ENCODE measurements at regions of chr12 and their contacts with region 1.

Region 1: DNA sequence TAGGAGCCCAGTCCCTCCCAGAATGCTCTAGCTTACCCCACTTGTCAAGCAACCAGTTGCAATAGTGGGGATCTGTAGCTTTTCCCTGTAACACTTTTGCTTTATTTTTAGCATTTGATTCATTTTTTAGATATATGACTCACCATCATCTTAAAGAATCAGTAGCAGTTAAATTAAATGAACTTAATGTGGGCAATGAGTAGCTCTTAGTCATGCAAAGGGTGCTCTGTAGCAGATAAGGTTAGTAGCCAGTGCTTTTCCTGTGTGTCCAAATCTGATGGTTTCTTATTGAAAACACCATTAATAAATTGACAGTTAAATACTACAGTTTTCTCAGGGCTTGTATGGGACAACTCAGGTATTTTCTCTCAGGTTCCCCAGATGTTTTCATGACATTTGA is 311.8 kb downstream of the RERGL start:
- DNase-seq: no peak
- ATAC-seq: no peak
- H3K4me3 ChIP-seq: no peak overlapping the region
- H3K27ac ChIP-seq: no peak overlapping the region
- H3K4me1 ChIP-seq: no peaks in the 10 kb centered on the region
- H3K27me3 ChIP-seq: no peaks in the 10 kb centered on the region
- CTCF ChIP-seq: no peak

Region 2: GRCh38 chr12:17352164-17352563 is 426.1 kb before region 1 on chr12:
- intact Hi-C with region 1: no loop called
- DNase-seq: no peak
- ATAC-seq: no peak
- H3K4me3 ChIP-seq: no peak overlapping the region
- H3K27ac ChIP-seq: no peak overlapping the region
- H3K4me1 ChIP-seq: no peaks in the 10 kb centered on the region
- H3K27me3 ChIP-seq: no peaks in the 10 kb centered on the region
- CTCF ChIP-seq: no peak

Region 3: GRCh38 chr12:17829813-17830212 is 51.6 kb after region 1 on chr12:
- intact Hi-C with region 1: no loop called
- DNase-seq: no peak
- ATAC-seq: no peak
- H3K4me3 ChIP-seq: no peak overlapping the region
- H3K27ac ChIP-seq: no peak overlapping the region
- H3K4me1 ChIP-seq: no peaks in the 10 kb centered on the region
- H3K27me3 ChIP-seq: no peaks in the 10 kb centered on the region
- CTCF ChIP-seq: no peak

Region 4: DNA sequence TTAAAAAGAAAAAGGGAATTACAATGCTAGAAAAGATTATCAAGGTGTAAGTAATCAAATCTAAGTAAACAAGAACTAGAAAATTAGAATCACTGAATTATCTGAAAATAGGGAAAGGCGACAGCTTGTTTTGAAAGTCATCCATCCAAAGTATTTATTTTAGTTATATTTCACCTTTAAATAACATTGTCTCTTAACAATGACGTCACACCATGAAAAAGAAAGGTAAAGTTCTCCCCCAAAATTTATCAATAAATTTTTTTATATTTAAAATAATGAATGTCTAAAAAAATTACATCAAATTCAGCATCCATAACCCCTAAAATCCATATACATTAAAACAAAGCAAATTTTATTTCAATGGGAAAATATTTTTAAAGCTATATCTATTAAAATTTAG is 88.6 kb after region 1 on chr12:
- intact Hi-C with region 1: loop called (anchors 5 kb)
- DNase-seq: no peak
- ATAC-seq: no peak
- H3K4me3 ChIP-seq: no peak overlapping the region
- H3K27ac ChIP-seq: no peak overlapping the region
- H3K4me1 ChIP-seq: no peaks in the 10 kb centered on the region
- H3K27me3 ChIP-seq: no peaks in the 10 kb centered on the region
- CTCF ChIP-seq: no peak

Measured in lower lobe of right lung (tissue), 2 donors.